OCI-LY7 (cell line): ENCODE measurements at regions of chr12 and their contacts with region 1.

Region 1: DNA sequence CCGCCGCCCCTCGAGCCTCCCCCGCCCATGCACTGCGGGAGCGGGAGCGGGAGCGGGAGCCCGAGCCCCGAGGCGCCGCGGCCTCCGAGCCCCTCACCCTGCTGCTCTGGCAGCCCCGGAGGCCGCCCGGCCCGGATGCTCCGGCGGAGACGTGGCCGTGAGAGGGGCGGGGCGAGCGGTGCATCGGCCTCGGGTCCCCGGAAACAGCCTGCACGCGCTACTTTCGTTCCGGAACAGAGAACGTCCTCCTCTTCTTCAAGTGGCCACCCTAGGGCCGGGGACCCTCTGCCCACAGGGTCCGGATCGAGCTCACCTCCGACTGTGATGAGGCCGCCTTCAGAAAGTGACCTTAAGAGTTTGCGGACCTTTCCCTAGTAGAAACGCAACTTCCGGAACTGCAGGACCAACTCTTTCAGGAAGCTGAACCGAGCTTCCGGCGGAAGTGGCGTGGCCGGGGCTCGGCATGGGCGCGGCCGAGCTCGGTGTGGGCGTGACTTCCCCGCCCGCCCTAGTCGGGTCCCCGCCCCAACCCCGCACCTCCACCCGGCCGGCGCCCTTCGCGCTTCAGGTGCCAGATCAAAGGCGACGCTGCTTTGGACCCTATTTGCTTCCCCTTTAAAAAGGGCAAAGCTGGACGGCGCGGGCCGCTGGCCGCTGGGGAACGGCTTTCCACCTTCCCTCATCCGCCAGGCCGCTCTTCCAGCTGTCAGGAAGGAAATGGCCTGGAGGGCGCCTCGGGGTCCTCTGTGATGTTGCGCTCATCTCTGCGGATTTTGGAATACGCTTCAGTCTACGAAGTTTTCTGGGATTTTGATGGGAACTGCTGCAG is at the start of gene GOLGA3:
- DNase-seq: peak; percentile 97
- H3K4me3 ChIP-seq: peak within 1 kb of the TSS; percentile 100
- H3K27ac ChIP-seq: peak within 1 kb of the TSS; percentile 76
- H3K4me1 ChIP-seq: peaks cover 30% of the 10 kb centered on the region
- CTCF ChIP-seq: no peak
- total RNA-seq, gene GOLGA3: 51.2 and 53.8 TPM in 2 replicates

Region 2: GRCh38 chr12:132560614-132561426 is 268.1 kb before region 1 on chr12:
- CTCF ChIA-PET with region 1: no interaction called
- POLR2A ChIA-PET with region 1: no interaction called
- intact Hi-C with region 1: no loop called
- DNase-seq: peak; percentile 89
- H3K4me3 ChIP-seq: peak overlapping the region; percentile 84
- H3K27ac ChIP-seq: peak overlapping the region; percentile 36
- H3K4me1 ChIP-seq: peaks cover 34% of the 10 kb centered on the region
- CTCF ChIP-seq: peak; percentile 88

Region 3: DNA sequence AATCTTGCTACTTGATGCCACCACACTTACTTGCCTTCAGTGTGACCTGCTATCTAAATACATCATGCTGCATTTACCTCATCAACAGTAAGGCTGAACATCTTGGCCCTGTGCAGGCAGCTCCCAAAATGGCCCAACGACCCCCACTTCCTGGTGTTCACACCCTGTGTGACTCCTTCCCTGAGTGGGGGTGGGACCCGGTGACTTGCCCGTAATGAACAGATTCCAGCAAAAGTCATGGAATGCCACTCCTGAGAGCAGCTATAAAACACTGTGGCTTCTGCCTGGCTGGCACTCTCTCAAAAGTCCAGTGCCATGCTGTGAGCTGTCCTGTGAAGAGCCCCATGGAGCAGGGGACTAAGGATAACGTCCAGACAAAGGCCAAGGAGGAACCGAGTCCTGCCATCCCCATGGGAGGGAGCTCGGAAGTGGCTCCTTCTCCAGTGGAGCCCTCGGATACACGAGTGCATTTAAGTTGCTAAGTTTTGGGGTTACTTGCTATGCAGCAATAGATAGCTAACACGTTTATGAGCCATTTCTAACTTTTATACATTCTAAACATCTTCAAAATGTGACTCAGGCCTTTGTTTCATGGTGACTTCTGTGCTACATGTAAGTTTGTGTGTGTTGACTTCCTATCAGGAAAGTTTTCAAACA is 177.3 kb before region 1 on chr12:
- CTCF ChIA-PET with region 1: no interaction called
- POLR2A ChIA-PET with region 1: no interaction called
- intact Hi-C with region 1: no loop called
- DNase-seq: no peak
- H3K4me3 ChIP-seq: no peak overlapping the region
- H3K27ac ChIP-seq: no peak overlapping the region
- H3K4me1 ChIP-seq: no peaks in the 10 kb centered on the region
- CTCF ChIP-seq: no peak

Region 4: GRCh38 chr12:132798836-132799235 is 30.1 kb before region 1 on chr12:
- CTCF ChIA-PET with region 1: no interaction called
- POLR2A ChIA-PET with region 1: no interaction called
- intact Hi-C with region 1: no loop called
- DNase-seq: no peak
- H3K4me3 ChIP-seq: no peak overlapping the region
- H3K27ac ChIP-seq: no peak overlapping the region
- H3K4me1 ChIP-seq: no peaks in the 10 kb centered on the region
- CTCF ChIP-seq: no peak

Region 5: GRCh38 chr12:132887513-132888351 is 58.8 kb after region 1 on chr12 and contains the start of gene CHFR:
- CTCF ChIA-PET with region 1: interaction called, 3 read pairs
- POLR2A ChIA-PET with region 1: no interaction called
- intact Hi-C with region 1: loop called (anchors 5 kb)
- DNase-seq: peak; percentile 98
- H3K4me3 ChIP-seq: peak within 1 kb of the TSS; percentile 95
- H3K27ac ChIP-seq: peak within 1 kb of the TSS; percentile 43
- H3K4me1 ChIP-seq: peaks cover 14% of the 10 kb centered on the region
- CTCF ChIP-seq: no peak
- total RNA-seq, gene CHFR: 25.4 and 38.2 TPM in 2 replicates

Region 6: GRCh38 chr12:132908145-132909044 is 79.5 kb after region 1 on chr12:
- CTCF ChIA-PET with region 1: no interaction called
- POLR2A ChIA-PET with region 1: no interaction called
- intact Hi-C with region 1: loop called (anchors 5 kb)
- DNase-seq: peak; percentile 98
- H3K4me3 ChIP-seq: peak overlapping the region; percentile 75
- H3K27ac ChIP-seq: peak overlapping the region; percentile 73
- H3K4me1 ChIP-seq: peaks cover 15% of the 10 kb centered on the region
- CTCF ChIP-seq: no peak

Region 7: GRCh38 chr12:132921685-132922084 is 92.8 kb after region 1 on chr12:
- CTCF ChIA-PET with region 1: no interaction called
- POLR2A ChIA-PET with region 1: no interaction called
- intact Hi-C with region 1: no loop called
- DNase-seq: no peak
- H3K4me3 ChIP-seq: no peak overlapping the region
- H3K27ac ChIP-seq: no peak overlapping the region
- H3K4me1 ChIP-seq: no peaks in the 10 kb centered on the region
- CTCF ChIP-seq: peak; percentile 77